ENCODE measurements at regions of chrX and their contacts with region 1.

Region 1: DNA sequence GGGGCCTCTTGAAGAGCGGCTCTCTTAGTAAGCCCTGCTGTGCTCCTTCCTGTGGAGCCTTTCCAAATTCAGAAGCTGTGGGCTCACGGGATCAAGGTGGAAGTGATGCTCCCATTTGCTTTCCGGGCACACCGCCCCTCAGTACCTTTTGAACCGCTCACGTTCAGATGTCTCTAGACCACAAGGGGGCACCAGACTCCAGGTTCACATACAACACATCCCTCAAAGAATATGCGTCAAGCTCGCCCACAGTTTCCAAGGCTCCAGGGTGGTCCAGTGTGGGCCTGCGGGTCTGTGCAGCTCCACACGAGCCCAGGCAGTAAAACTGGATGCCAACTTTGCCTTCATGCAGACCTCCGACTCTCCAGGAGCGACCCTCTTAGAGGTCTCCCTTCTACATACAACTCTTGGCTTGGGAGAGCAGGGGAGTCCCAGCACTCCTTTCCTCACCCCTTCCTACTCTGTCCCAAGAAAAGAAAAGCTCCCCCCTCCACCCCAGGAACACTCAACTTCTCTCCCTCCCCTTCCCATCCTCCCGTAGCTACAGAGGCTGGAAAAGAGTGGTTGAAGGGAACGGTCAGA is 11.0 kb downstream of the SUPT20HL1 start:
- H3K4me3 Mint-ChIP-seq: no peak overlapping the region
- H3K27ac Mint-ChIP-seq: no peak overlapping the region
- H3K4me1 Mint-ChIP-seq: peaks cover 15% of the 10 kb centered on the region
- H3K27me3 Mint-ChIP-seq: peaks cover 10% of the 10 kb centered on the region

Region 2: DNA sequence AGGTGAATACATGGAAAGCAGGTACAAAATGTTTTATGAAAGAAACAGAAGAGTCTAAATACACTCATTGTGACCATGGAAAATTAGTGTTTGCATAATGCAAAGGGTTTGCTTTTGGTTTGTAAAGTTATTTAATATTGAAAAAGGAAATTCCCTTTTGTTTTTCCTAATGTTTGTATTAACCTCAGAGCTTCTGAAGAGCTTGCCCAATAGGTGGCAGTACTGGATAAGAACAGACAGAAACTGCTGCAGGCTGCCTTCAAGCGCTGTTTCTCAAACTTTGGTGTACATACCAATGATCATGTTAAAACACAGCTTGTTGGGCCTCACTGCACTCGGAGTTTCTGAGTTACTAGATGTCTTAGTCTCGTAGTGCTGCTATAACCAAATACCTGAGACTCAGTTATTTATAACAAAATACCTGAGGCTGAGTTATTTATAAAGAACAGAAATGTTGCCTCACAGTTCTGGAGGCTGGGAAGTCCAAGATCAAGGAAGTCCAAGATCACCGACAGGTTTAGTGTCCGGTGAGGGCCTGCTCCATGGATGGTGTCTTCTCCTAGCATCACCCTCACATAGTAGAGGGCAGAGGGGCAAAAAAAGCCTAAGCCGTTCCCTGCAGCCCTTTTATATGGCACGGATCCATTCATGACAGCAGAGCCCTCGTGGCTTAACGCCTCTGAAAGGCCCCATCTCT is 111.8 kb before region 1 on chrX:
- intact Hi-C with region 1: loop called (anchors 10 kb)
- H3K4me3 Mint-ChIP-seq: no peak overlapping the region
- H3K27ac Mint-ChIP-seq: no peak overlapping the region
- H3K4me1 Mint-ChIP-seq: peaks cover 16% of the 10 kb centered on the region
- H3K27me3 Mint-ChIP-seq: peaks cover 4% of the 10 kb centered on the region

Region 3: GRCh38 chrX:25083661-25084060 is 712.2 kb after region 1 on chrX:
- intact Hi-C with region 1: no loop called
- H3K4me3 Mint-ChIP-seq: no peak overlapping the region
- H3K27ac Mint-ChIP-seq: no peak overlapping the region
- H3K4me1 Mint-ChIP-seq: no peaks in the 10 kb centered on the region
- H3K27me3 Mint-ChIP-seq: no peaks in the 10 kb centered on the region

Measured in dendritic cell treated with granulocyte-macrophage colony-stimulating factor and Interleukin-4, amounts not matched to agents 40 ng/mL and 50 ng/mL, for 4 days (primary cell).